Body of pancreas (tissue), 4 donors: ENCODE measurements at regions of chr11 and their contacts with region 1.

Region 1: GRCh38 chr11:33329705-33330329 is 72.6 kb downstream of the HIPK3 start:
- DNase-seq: peak; percentile 50 to 65 (median 60)
- ATAC-seq: peak; percentile 66
- H3K4me3 ChIP-seq: no peak overlapping the region
- H3K27ac ChIP-seq: no peak overlapping the region
- H3K4me1 ChIP-seq: peaks cover 16% of the 10 kb centered on the region
- H3K27me3 ChIP-seq: no peaks in the 10 kb centered on the region
- CTCF ChIP-seq: peak; percentile 31 to 74 (median 60)
- POLR2A ChIP-seq: no peak

Region 2: DNA sequence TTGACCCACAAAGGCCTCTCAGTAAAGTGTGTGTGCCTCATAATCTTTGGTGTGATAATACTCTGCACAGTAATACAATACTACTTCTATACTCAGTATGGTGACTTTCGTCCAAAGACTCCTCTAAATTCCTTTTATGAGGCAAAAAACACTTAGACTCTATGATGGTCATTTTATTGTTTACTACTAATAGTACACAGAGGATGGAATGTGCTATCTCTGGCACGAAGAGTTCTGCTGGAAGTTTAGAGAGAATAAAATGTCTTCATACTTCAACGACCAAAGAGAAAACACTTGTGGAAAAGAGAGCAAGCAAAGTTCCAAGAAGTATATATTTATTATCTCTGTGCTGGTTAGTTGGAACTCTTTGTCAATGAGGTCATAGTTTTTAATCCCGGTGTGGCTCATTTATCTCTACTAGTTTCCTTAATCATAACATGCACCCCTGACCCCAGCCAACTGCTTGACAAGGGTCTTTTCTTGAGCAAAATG is 161.1 kb before region 1 on chr11:
- intact Hi-C with region 1: loop called (anchors 5 kb)
- DNase-seq: no peak
- ATAC-seq: no peak
- H3K4me3 ChIP-seq: no peak overlapping the region
- H3K27ac ChIP-seq: no peak overlapping the region
- H3K4me1 ChIP-seq: no peaks in the 10 kb centered on the region
- H3K27me3 ChIP-seq: no peaks in the 10 kb centered on the region
- CTCF ChIP-seq: no peak
- POLR2A ChIP-seq: no peak

Region 3: DNA sequence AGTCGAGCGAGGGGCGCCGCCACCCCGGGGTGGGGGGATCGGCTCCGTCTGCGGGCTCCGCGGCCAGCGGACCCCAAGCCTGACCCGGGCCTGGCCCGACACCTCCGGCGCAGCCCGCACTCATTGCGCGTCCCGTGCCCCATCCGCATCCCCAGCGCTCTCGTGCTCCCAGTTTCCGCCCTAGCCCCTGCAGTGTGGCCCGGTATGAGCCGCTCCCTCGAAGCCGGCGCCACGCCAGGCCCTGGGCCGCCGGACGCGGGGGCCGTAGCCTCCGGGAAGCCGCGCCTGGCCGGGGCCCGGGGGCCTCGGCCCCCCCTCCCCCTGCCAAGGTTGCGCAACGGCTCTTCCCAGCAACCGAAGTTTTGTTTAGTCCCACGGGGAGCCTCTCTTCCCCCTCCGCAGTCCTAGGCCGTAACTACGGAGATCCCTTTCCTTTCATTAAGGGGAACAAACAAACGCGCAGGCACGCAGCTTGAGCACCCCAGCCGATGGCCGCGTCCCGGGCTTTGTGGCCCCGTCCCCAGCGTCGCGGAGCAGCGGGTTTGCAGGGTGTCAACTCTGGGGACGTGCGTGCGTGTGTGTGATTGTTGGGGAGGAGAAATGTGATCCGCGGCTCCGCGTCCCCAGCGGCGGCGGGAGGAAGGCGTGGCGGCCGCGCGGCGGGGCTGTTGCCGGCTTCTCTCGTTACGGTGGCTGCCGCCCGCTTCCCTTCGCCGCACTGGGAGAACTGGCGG is 71.8 kb before region 1 on chr11:
- intact Hi-C with region 1: loop called (anchors 10 kb)
- DNase-seq: peak; percentile 84 to 90 (median 86)
- ATAC-seq: peak; percentile 78
- H3K4me3 ChIP-seq: peak overlapping the region; percentile 14 to 46
- H3K27ac ChIP-seq: peak overlapping the region; percentile 100
- H3K4me1 ChIP-seq: peaks cover 41% of the 10 kb centered on the region
- H3K27me3 ChIP-seq: no peaks in the 10 kb centered on the region
- CTCF ChIP-seq: peak in 6 of 7 experiments; percentile 10 to 65 (median 46)
- POLR2A ChIP-seq: peak; percentile 68 to 94 (median 92)

Region 4: DNA sequence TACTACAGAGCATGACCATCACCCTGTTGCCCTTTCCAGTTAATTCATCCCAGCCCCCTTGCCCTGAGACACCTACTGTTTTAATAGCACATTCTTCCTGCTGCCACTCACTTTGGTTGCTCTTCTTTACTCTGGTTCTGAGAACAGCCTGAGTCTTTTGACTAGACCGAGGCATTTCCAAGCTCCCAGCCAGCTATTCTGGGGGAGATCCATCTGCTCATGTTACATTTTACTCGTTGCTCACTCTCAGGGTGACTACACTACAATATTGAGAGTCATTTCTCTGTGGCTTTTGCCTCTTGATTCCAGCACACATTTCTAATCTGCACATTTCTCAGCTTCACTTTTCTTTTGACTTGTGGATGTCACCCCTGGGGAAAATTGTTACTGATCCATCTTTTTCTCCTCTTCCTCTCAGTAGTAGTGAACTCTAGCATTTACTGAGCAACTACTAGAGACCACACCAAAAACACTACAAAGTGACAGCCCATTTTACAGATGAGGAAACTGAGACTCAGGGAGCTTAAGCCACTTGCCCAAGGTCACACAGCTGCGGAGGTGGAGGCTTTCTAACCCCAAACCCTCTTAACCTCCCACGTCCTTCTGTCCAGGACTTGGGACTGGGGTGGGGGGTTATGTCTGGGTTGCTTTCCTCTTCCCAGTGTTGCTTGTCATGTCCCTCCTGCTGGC is 253.0 kb after region 1 on chr11:
- intact Hi-C with region 1: no loop called
- DNase-seq: no peak
- ATAC-seq: no peak
- H3K4me3 ChIP-seq: no peak overlapping the region
- H3K27ac ChIP-seq: no peak overlapping the region
- H3K4me1 ChIP-seq: no peaks in the 10 kb centered on the region
- H3K27me3 ChIP-seq: no peaks in the 10 kb centered on the region
- CTCF ChIP-seq: no peak
- POLR2A ChIP-seq: no peak